ENCODE measurements at regions of chr12 and their contacts with region 1.

Region 1: GRCh38 chr12:53159195-53159839 is 21.2 kb upstream of the ZNF740 start:
- DNase-seq: peak; percentile 88
- ATAC-seq: peak; percentile 100
- H3K4me3 ChIP-seq: no peak overlapping the region
- H3K4me3 Mint-ChIP-seq: no peak overlapping the region
- H3K27ac ChIP-seq: no peak overlapping the region
- H3K27ac Mint-ChIP-seq: no peak overlapping the region
- H3K4me1 ChIP-seq: peaks cover 4 to 8% of the 10 kb centered on the region in 2 donors
- H3K4me1 Mint-ChIP-seq: peaks cover 4% of the 10 kb centered on the region
- H3K27me3 ChIP-seq: no peaks in the 10 kb centered on the region
- H3K27me3 Mint-ChIP-seq: no peaks in the 10 kb centered on the region
- CTCF ChIP-seq: peak; percentile 97

Region 2: DNA sequence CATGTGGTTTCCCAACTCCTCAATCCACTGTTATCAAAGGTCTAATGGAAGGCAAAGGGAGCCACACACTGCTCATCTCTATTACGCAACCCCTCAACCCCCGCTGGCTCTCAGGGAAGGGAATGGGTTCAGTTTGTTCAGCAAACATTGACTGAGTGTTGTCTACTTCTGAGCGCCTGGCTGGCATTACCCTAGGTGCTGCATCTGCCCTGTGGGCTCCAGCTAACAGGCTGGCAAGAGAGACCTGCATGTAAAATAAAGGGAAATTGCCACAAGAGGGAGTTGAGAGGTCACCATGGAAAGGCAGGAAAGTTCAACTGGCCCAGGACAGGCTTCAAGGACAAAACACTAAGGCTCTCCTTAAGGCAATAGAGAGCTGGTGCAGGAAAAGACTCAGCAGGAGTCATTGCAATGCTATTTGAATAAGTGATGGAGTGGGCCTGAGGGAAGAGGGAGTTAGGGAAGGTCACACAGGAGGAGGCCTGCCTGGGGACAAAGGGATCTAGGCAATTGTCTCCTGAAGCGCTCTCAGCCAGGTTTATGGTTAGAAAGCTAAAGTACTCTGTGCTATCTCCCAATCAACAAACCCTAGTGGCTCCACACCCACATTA is 15.7 kb after region 1 on chr12:
- CTCF ChIA-PET with region 1: interaction called, 47 read pairs
- POLR2A ChIA-PET with region 1: no interaction called
- intact Hi-C with region 1: loop called (anchors 1 kb)
- DNase-seq: no peak
- ATAC-seq: no peak
- H3K4me3 ChIP-seq: no peak overlapping the region
- H3K4me3 Mint-ChIP-seq: no peak overlapping the region
- H3K27ac ChIP-seq: no peak overlapping the region
- H3K27ac Mint-ChIP-seq: no peak overlapping the region
- H3K4me1 ChIP-seq: peaks cover 6% of the 10 kb centered on the region in 2 donors
- H3K4me1 Mint-ChIP-seq: peaks cover 9% of the 10 kb centered on the region
- H3K27me3 ChIP-seq: no peaks in the 10 kb centered on the region
- H3K27me3 Mint-ChIP-seq: no peaks in the 10 kb centered on the region
- CTCF ChIP-seq: no peak

Region 3: GRCh38 chr12:53200458-53201176 is 41.3 kb after region 1 on chr12:
- CTCF ChIA-PET with region 1: interaction called, 84 read pairs
- POLR2A ChIA-PET with region 1: no interaction called
- intact Hi-C with region 1: loop called (anchors 1 kb)
- DNase-seq: peak; percentile 71
- ATAC-seq: peak; percentile 59
- H3K4me3 ChIP-seq: peak overlapping the region in 3 of 5 experiments; percentile 17 to 54 (median 23)
- H3K4me3 Mint-ChIP-seq: peak overlapping the region; percentile 70
- H3K27ac ChIP-seq: peak overlapping the region; percentile 39 to 58
- H3K27ac Mint-ChIP-seq: peak overlapping the region; percentile 80
- H3K4me1 ChIP-seq: peaks cover 79 to 86% of the 10 kb centered on the region in 2 donors
- H3K4me1 Mint-ChIP-seq: peaks cover 68% of the 10 kb centered on the region
- H3K27me3 ChIP-seq: no peaks in the 10 kb centered on the region
- H3K27me3 Mint-ChIP-seq: no peaks in the 10 kb centered on the region
- CTCF ChIP-seq: no peak

Region 4: GRCh38 chr12:53230108-53230850 is 71.0 kb after region 1 on chr12:
- CTCF ChIA-PET with region 1: no interaction called
- POLR2A ChIA-PET with region 1: no interaction called
- intact Hi-C with region 1: no loop called
- DNase-seq: no peak
- ATAC-seq: no peak
- H3K4me3 ChIP-seq: no peak overlapping the region
- H3K4me3 Mint-ChIP-seq: peak overlapping the region; percentile 45
- H3K27ac ChIP-seq: no peak overlapping the region
- H3K27ac Mint-ChIP-seq: peak overlapping the region; percentile 41
- H3K4me1 ChIP-seq: peaks cover 17 to 28% of the 10 kb centered on the region in 2 donors
- H3K4me1 Mint-ChIP-seq: peaks cover 21% of the 10 kb centered on the region
- H3K27me3 ChIP-seq: peaks cover 0 to 11% (median 2%) of the 10 kb centered on the region in 4 experiments
- H3K27me3 Mint-ChIP-seq: peaks cover 6% of the 10 kb centered on the region
- CTCF ChIP-seq: no peak

Region 5: GRCh38 chr12:53251477-53252348 is 92.4 kb after region 1 on chr12:
- CTCF ChIA-PET with region 1: interaction called, 3 read pairs
- POLR2A ChIA-PET with region 1: no interaction called
- intact Hi-C with region 1: loop called (anchors 1 kb)
- DNase-seq: peak; percentile 85
- ATAC-seq: peak; percentile 81
- H3K4me3 ChIP-seq: peak overlapping the region; percentile 56 to 95 (median 88)
- H3K4me3 Mint-ChIP-seq: peak overlapping the region; percentile 99
- H3K27ac ChIP-seq: peak overlapping the region; percentile 59 to 92
- H3K27ac Mint-ChIP-seq: peak overlapping the region; percentile 96
- H3K4me1 ChIP-seq: peaks cover 44 to 52% of the 10 kb centered on the region in 2 donors
- H3K4me1 Mint-ChIP-seq: peaks cover 49% of the 10 kb centered on the region
- H3K27me3 ChIP-seq: no peaks in the 10 kb centered on the region
- H3K27me3 Mint-ChIP-seq: no peaks in the 10 kb centered on the region
- CTCF ChIP-seq: peak; percentile 42

Region 6: GRCh38 chr12:53279283-53279869 is 120.1 kb after region 1 on chr12:
- CTCF ChIA-PET with region 1: interaction called, 140 read pairs
- POLR2A ChIA-PET with region 1: no interaction called
- intact Hi-C with region 1: no loop called
- DNase-seq: no peak
- ATAC-seq: no peak
- H3K4me3 ChIP-seq: no peak overlapping the region
- H3K4me3 Mint-ChIP-seq: no peak overlapping the region
- H3K27ac ChIP-seq: no peak overlapping the region
- H3K27ac Mint-ChIP-seq: no peak overlapping the region
- H3K4me1 ChIP-seq: no peaks in the 10 kb centered on the region
- H3K4me1 Mint-ChIP-seq: no peaks in the 10 kb centered on the region
- H3K27me3 ChIP-seq: no peaks in the 10 kb centered on the region
- H3K27me3 Mint-ChIP-seq: no peaks in the 10 kb centered on the region
- CTCF ChIP-seq: no peak

Region 7: DNA sequence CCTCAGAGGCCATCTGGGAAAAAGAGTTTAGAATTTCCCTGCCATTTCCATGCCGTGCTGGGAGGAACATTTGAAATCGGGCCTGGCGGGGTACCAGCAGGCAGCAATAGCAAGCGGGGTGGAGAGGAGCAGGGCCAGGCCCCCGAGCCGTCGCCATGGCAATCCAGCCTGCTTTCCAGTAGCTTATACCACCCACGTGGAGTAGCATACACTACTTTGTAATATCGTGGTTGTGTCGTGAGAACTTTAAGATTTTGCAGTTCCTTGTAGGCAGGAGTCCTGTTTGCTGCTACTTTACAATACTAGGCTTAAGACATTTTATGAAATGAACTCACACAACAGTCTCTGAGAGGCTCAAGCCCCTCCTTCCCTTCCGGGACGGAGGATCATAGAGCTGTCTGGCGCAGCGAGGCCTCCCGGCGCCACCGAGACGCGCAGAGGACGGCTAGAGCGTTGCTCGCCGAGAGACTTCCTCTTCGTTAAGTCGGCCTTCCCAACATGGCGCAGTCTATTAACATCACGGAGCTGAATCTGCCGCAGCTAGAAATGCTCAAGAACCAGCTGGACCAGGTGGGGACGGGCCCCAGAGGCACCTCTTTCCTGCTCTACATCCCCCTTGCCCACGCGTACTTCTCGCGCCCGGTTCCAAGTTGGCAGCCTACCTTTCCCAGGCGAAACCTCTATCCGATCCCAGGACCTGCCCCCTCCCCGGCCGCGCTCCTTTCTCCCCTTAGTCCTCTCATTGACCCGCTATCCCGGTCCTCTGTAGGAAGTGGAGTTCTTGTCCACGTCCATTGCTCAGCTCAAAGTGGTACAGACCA is 136.0 kb after region 1 on chr12 and contains the start of gene PFDN5:
- CTCF ChIA-PET with region 1: interaction called, 140 read pairs
- POLR2A ChIA-PET with region 1: no interaction called
- intact Hi-C with region 1: loop called (anchors 2 kb)
- DNase-seq: peak; percentile 92
- ATAC-seq: peak; percentile 90
- H3K4me3 ChIP-seq: peak within 1 kb of the TSS; percentile 64 to 96 (median 82)
- H3K4me3 Mint-ChIP-seq: peak within 1 kb of the TSS; percentile 100
- H3K27ac ChIP-seq: peak within 1 kb of the TSS; percentile 69 to 86
- H3K27ac Mint-ChIP-seq: peak within 1 kb of the TSS; percentile 99
- H3K4me1 ChIP-seq: peaks cover 26 to 39% of the 10 kb centered on the region in 2 donors
- H3K4me1 Mint-ChIP-seq: peaks cover 50% of the 10 kb centered on the region
- H3K27me3 ChIP-seq: no peaks in the 10 kb centered on the region
- H3K27me3 Mint-ChIP-seq: no peaks in the 10 kb centered on the region
- CTCF ChIP-seq: no peak
- total RNA-seq, gene PFDN5: 627 and 654 TPM in 2 replicates